ENCODE measurements at regions of chr9 and their contacts with region 1.

Region 1: DNA sequence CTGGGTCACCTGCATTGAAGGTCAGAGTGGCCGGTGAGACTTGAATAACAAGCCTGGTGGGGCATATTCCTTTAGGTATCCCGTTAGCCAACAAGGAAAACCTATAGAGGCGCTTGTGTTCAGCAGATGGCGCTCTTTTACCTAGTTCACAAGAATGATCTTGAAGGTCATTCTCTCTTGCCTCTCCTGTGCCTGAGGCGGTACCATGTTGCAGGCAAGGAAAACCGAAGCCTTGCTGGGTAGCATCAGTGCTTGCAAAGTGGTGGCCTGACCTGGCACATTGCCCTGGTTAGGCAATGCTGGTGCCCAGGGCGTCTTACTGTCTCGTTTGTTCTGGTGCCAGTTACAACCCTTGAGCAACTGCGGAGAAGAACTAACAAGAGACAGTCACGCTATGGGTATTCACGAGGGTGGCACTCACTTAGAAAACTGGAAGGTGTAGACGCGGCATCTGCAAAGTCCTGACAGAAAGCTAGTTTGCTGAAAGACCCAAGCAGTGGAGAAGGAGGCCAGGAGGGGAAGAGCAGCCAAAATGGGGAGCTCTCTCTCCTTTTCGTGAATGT is 56.7 kb downstream of the AOPEP start:
- DNase-seq: peak; percentile 71 to 88 (median 78)
- ATAC-seq: peak; percentile 66 to 86 (median 78)
- H3K4me3 ChIP-seq: no peak overlapping the region
- H3K27ac ChIP-seq: peak overlapping the region in 10 of 12 donors; percentile 54 to 90 (median 80)
- H3K4me1 ChIP-seq: peaks cover 0 to 34% (median 19%) of the 10 kb centered on the region in 12 donors
- H3K27me3 ChIP-seq: no peaks in the 10 kb centered on the region
- CTCF ChIP-seq: peak; percentile 49 to 87 (median 73)
- POLR2A ChIP-seq: no peak

Region 2: GRCh38 chr9:93871294-93871693 is 911.9 kb before region 1 on chr9:
- intact Hi-C with region 1: no loop called
- DNase-seq: no peak
- ATAC-seq: no peak
- H3K4me3 ChIP-seq: no peak overlapping the region
- H3K27ac ChIP-seq: no peak overlapping the region
- H3K4me1 ChIP-seq: no peaks in the 10 kb centered on the region
- H3K27me3 ChIP-seq: peaks cover 0 to 27% (median 3%) of the 10 kb centered on the region in 9 donors
- CTCF ChIP-seq: no peak
- POLR2A ChIP-seq: no peak

Region 3: GRCh38 chr9:94681508-94681907 is 101.7 kb before region 1 on chr9:
- intact Hi-C with region 1: loop called in 7 of 10 experiments (anchors 2 to 10 kb)
- DNase-seq: peak; percentile 69 to 87 (median 82)
- ATAC-seq: peak; percentile 92 to 98 (median 98)
- H3K4me3 ChIP-seq: no peak overlapping the region
- H3K27ac ChIP-seq: peak overlapping the region in 6 of 12 donors; percentile 11 to 47 (median 32)
- H3K4me1 ChIP-seq: peaks cover 0 to 9% (median 0%) of the 10 kb centered on the region in 12 donors
- H3K27me3 ChIP-seq: no peaks in the 10 kb centered on the region
- CTCF ChIP-seq: peak; percentile 62 to 85 (median 78)
- POLR2A ChIP-seq: no peak

Region 4: GRCh38 chr9:94734054-94734754 is 49.0 kb before region 1 on chr9:
- intact Hi-C with region 1: no loop called
- DNase-seq: peak in 1 of 5 donors; percentile 20
- ATAC-seq: peak in 3 of 4 donors; percentile 55 to 91 (median 86)
- H3K4me3 ChIP-seq: no peak overlapping the region
- H3K27ac ChIP-seq: peak overlapping the region in 6 of 12 donors; percentile 8 to 54 (median 20)
- H3K4me1 ChIP-seq: peaks cover 0 to 21% (median 12%) of the 10 kb centered on the region in 12 donors
- H3K27me3 ChIP-seq: no peaks in the 10 kb centered on the region
- CTCF ChIP-seq: no peak
- POLR2A ChIP-seq: no peak

Region 5: DNA sequence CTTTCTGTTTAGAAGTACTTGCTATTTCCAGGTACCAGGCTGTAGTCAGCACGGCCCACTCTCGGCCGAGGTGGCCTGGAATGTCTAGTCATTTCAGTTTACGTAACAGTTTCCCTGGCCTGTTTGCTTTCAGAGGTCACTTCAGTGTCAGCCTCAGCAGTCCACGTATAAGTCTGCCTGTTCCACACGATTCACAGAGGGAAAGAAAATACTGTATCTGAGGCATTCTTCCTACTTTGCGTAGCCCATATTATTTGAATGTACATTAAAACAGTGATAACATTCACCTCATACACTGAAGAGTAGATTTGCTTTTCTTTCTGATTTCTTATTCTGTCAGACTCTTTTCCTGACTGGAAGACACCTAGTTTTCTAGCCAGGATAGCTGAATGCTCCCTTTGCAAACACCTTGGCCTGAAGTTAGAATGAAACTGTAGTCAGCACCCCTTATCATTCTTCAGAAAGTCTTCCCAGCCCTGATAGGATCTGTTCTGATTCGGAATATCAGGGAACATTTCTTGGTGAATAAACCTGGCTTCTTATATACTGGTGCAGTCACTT is 84.2 kb after region 1 on chr9:
- intact Hi-C with region 1: loop called in 5 of 10 experiments (anchors 5 kb)
- DNase-seq: peak in 4 of 5 donors; percentile 73 to 84 (median 76)
- ATAC-seq: peak; percentile 76 to 87 (median 84)
- H3K4me3 ChIP-seq: peak overlapping the region in 6 of 12 donors; percentile 2 to 22 (median 7)
- H3K27ac ChIP-seq: peak overlapping the region; percentile 70 to 98 (median 88)
- H3K4me1 ChIP-seq: peaks cover 10 to 83% (median 63%) of the 10 kb centered on the region in 12 donors
- H3K27me3 ChIP-seq: no peaks in the 10 kb centered on the region
- CTCF ChIP-seq: no peak
- POLR2A ChIP-seq: peak in 1 of 2 donors; percentile 45

Region 6: GRCh38 chr9:94945197-94946144 is 162.3 kb after region 1 on chr9:
- intact Hi-C with region 1: loop called in 1 of 10 experiments (anchors 5 kb)
- DNase-seq: peak; percentile 68 to 78 (median 72)
- ATAC-seq: peak; percentile 86 to 89 (median 88)
- H3K4me3 ChIP-seq: no peak overlapping the region
- H3K27ac ChIP-seq: peak overlapping the region in 9 of 12 donors; percentile 12 to 66 (median 53)
- H3K4me1 ChIP-seq: peaks cover 2 to 52% (median 33%) of the 10 kb centered on the region in 12 donors
- H3K27me3 ChIP-seq: no peaks in the 10 kb centered on the region
- CTCF ChIP-seq: no peak
- POLR2A ChIP-seq: no peak

Region 7: DNA sequence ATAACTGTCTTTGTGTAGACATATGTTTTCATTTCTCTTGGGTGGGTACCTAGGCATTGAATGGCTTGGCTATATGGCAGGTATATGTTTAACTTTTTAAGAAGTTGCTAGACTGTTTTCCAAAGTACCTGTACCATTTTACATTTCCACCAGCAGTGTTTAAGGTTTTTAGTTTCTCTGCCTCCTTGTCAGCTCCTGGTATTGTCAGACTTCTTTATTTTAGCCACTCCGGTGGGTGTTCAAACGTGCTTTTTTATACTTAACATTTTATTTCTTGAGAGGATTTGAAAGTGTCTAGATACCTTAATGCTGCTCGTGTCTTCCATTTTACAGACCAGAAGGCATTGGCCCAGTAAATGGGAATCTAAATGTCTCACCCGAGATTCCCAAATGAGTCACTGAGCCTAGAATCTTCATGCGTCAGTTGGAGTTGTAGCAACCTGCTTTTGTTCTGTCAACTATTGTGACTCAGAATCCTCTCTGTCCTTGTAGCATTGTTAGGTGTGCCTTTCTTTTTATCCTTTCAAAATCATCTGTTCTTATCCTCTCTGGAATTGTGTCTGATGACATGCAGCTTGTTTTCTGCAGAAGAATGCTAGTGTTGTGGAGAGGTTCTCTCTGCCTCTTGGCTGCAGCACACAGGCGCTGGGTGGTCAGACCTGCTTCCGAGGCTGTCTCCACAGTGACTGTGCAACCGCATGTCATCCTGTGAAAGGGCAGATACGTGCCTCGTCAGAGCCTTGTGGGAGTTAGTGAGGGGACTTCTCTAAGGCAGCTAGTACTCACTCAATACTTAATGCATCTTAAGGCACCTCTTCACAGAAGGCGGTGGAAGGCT is 235.1 kb after region 1 on chr9:
- intact Hi-C with region 1: loop called in 2 of 10 experiments (anchors 5 kb)
- DNase-seq: peak; percentile 48 to 74 (median 65)
- ATAC-seq: peak; percentile 63 to 86 (median 76)
- H3K4me3 ChIP-seq: peak overlapping the region in 8 of 12 donors; percentile 1 to 25 (median 15)
- H3K27ac ChIP-seq: peak overlapping the region; percentile 14 to 99 (median 74)
- H3K4me1 ChIP-seq: peaks cover 11 to 100% (median 81%) of the 10 kb centered on the region in 12 donors
- H3K27me3 ChIP-seq: no peaks in the 10 kb centered on the region
- CTCF ChIP-seq: no peak
- POLR2A ChIP-seq: no peak

Region 8: DNA sequence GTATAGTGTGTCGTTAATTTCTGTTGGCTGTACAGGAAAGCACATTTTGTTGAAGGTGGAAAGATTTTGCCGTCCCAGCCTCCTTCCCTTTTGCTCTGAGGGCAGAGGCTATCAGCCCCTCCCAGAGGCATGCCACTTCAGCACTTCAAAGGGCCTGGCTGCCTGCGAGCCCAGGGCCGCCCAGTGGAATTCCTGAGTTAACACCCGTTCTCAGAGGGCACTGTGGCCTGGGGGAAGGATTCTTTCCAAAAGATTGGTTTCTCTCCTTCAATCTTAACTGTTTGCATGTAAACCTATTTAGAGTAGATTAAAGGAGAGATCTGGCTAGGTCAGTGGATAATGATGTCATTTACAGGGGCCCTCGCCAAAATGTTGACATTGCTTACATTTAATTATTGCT is 295.8 kb after region 1 on chr9:
- intact Hi-C with region 1: loop called in 1 of 10 experiments (anchors 5 kb)
- DNase-seq: no peak
- ATAC-seq: peak; percentile 44 to 56 (median 54)
- H3K4me3 ChIP-seq: no peak overlapping the region
- H3K27ac ChIP-seq: peak overlapping the region in 11 of 12 donors; percentile 51 to 81 (median 70)
- H3K4me1 ChIP-seq: peaks cover 31 to 100% (median 76%) of the 10 kb centered on the region in 12 donors
- H3K27me3 ChIP-seq: no peaks in the 10 kb centered on the region
- CTCF ChIP-seq: peak in 1 of 12 donors; percentile 11
- POLR2A ChIP-seq: no peak